Dorsolateral prefrontal cortex (tissue), 120 donors: ENCODE measurements at regions of chr6 and their contacts with region 1.

Region 1: DNA sequence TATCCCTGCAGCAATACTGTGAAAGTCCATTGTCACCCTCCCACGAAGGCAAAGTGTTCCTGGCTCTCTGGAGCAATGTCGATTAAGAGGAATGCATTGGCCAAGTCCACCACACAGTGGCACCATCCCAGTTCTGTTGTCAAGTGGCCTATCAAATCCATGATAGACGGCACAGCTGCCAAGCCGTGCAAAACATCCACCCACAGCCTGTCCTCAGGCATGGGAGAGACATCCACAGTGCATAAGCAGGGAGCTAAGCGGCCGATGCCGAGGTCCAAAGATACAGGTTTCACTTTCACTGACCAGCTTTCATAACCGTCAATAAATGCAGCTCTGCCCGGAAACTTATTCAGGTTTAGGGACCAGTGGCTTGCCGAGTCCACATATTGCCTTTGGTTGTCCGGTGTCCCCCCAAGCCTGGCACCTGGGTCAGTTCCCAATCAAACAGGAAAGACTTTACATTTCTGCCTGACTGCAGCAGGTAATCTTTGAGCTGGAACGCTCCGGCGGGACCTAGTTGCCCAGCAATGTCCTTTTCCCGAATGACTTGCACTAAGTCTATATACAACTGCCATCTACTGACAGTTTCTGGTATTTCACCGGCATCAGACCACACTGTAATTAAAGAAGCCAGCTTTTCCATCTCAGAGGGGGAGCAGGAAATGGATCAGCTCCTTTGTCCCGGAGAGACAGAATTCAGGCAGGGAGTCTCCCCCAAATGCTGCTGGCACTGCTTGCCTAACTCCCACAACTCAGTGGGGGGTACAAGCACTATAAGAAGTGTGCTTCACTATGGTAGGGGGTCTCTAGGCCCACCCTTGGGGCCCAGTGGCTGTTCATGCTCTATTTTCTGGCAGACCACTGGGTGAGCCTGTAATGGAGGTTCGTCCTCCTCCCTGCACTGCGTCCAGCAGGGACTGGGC is 6.3 kb downstream of the ZKSCAN3 start:
- DNase-seq: peak; percentile 44 to 88 (median 77)
- H3K4me3 ChIP-seq: peak overlapping the region; percentile 41 to 89 (median 70)
- H3K27ac ChIP-seq: peak overlapping the region in 58 of 59 donors; percentile 27 to 96 (median 87)
- H3K27me3 ChIP-seq: no peaks in the 10 kb centered on the region
- CTCF ChIP-seq: peak; percentile 62 to 93 (median 82)

Region 2: GRCh38 chr6:28080631-28081485 is 275.1 kb before region 1 on chr6:
- intact Hi-C with region 1: loop called (anchors 5 to 10 kb)
- DNase-seq: peak; percentile 85 to 95 (median 92)
- H3K4me3 ChIP-seq: peak overlapping the region; percentile 61 to 96 (median 83)
- H3K27ac ChIP-seq: peak overlapping the region; percentile 27 to 98 (median 87)
- H3K27me3 ChIP-seq: no peaks in the 10 kb centered on the region
- CTCF ChIP-seq: peak in 30 of 56 donors; percentile 11 to 55 (median 20)

Region 3: GRCh38 chr6:28252009-28252975 is 103.7 kb before region 1 on chr6 and contains the start of gene ZKSCAN4:
- intact Hi-C with region 1: loop called (anchors 5 to 10 kb)
- DNase-seq: peak; percentile 35 to 87 (median 81)
- H3K4me3 ChIP-seq: peak within 1 kb of the TSS; percentile 57 to 100 (median 91)
- H3K27ac ChIP-seq: peak within 1 kb of the TSS in 54 of 59 donors; percentile 1 to 91 (median 66)
- H3K27me3 ChIP-seq: peaks cover 0 to 11% (median 0%) of the 10 kb centered on the region in 45 donors
- CTCF ChIP-seq: peak in 19 of 56 donors; percentile 6 to 41 (median 19)
- total RNA-seq, gene ZKSCAN4: 3.5 to 8.7 (median 6.2) TPM

Region 4: GRCh38 chr6:28266962-28267694 is 88.9 kb before region 1 on chr6 and contains the start of gene ZSCAN26:
- intact Hi-C with region 1: loop called in 1 of 2 experiments (anchors 5 kb)
- DNase-seq: peak; percentile 50 to 88 (median 84)
- H3K4me3 ChIP-seq: peak within 1 kb of the TSS; percentile 55 to 99 (median 85)
- H3K27ac ChIP-seq: peak within 1 kb of the TSS; percentile 61 to 98 (median 91)
- H3K27me3 ChIP-seq: no peaks in the 10 kb centered on the region
- CTCF ChIP-seq: peak in 20 of 56 donors; percentile 5 to 45 (median 20)
- total RNA-seq, gene ZSCAN26: 22.8 to 52.6 (median 35.5) TPM